Lower leg skin (tissue), 4 donors: ENCODE measurements at regions of chr3 and their contacts with region 1.

Region 1: DNA sequence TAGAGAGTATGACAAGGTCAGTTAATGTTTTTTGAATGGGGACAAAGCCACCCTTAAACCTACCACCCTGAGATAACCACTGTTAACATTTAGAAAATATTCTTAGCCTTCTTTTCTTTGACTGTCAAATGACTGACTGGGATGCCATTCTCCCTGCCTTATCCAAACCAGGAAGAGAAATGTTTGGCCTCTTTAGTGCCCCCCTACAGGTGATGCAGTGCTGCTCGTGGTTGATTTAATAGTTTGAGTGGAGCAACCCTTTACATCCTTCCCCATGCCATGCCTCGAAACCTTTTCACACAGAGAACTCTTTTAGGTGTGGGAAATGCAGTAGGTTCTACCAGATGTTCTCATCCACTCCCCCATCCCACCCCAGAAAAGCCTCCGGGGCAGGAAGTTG is 38.7 kb upstream of the UMPS start:
- DNase-seq: no peak
- H3K4me3 ChIP-seq: no peak overlapping the region
- CTCF ChIP-seq: no peak
- POLR2A ChIP-seq: no peak

Region 2: DNA sequence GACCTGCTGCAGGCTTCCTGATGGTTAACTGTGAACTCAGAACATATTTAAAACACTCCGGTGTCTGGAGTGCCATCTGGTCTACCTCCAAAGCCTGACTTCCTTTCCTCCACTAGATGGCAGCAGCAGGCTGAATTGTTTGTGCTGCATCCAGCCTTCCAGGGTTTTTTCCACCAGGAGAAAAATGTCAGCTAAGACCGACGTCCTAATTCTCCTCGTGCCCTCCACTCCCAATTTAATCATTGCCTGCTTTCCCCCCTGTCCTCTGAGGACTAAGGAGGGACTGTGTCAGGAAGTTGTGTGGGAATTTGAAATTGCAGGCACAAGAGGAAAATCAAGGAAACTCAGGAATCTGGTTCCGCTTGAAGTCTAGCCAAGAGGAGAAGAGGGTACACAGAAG is 126.6 kb before region 1 on chr3:
- intact Hi-C with region 1: loop called (anchors 5 kb)
- DNase-seq: peak; percentile 71 to 87
- H3K4me3 ChIP-seq: no peak overlapping the region
- CTCF ChIP-seq: peak in 1 of 3 donors; percentile 70
- POLR2A ChIP-seq: no peak